ENCODE measurements at regions of chr5 and their contacts with region 1.

Region 1: DNA sequence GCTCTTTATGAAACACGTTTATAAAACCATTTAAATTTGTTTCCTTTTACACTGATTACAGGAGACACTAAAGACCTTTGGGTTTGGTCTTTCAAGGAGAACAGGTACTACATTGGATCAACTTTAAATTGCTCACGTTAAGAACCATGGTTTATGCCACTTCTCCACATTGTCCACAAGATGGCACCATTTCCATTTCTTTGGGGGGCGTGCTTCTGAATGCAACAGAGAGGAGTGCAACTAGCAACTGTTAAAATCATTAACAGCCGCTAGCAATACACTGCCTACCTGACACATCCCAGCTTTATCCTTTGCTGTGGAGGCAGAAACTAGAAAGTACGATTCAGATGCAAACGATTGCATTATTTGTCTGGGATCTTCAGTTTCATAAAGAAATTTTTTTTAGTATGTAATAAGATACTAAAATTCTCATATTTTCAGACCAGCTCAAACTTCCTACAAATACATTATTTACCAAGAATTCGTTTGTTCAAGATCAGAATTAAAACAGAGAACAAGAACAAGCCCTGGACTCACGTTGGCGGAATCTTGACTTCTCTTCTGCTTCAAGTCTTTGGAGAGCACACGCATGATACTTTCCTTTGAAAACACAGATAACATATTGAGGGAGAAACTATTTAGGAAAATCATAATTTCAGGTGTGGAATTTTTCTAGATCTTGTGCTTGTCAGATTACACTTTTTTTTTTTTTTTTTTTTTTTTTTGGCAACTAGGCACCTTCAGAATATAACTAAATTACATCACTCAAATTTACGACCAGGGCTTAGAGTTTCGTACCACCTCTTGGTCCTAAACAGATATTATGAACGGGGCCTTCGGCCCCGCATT is 702 bp downstream of the CDC20B start:
- DNase-seq: no peak
- H3K4me3 ChIP-seq: peak overlapping the region; percentile 29 to 58 (median 42); a peak in 7 of 8 replicates
- H3K27ac ChIP-seq: no peak overlapping the region
- H3K4me1 ChIP-seq: peaks cover 0 to 8% (median 5%) of the 10 kb centered on the region in 4 experiments; a peak in 4 of 7 replicates
- H3K27me3 ChIP-seq: peaks cover 24 to 48% (median 38%) of the 10 kb centered on the region in 4 experiments
- CTCF ChIP-seq: peak in 2 of 3 experiments; percentile 79; a peak in 3 of 4 replicates
- EP300 ChIP-seq: no peak
- POLR2A ChIP-seq: no peak
- RAD21 ChIP-seq: peak; percentile 95

Region 2: DNA sequence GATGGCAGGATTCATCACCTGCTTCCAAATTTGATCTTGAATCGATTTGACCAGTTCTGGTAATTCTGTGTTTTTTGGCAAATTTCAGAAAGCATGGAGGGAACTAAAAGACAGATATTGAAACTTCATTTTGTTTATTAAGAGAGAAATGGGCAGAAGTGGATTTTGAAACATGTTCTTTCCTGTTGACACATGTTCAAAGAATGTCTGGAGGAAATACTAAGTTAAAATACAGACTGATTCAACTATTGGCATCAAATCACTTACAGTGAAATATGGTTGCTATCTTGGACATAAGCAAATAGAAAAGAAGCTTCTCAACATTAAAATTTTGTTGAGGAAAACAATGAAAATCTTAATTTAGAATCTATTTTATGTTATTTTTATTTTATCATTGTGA is 167.5 kb before region 1 on chr5:
- CTCF ChIA-PET with region 1: no interaction called
- POLR2A ChIA-PET with region 1: no interaction called
- DNase-seq: no peak
- H3K4me3 ChIP-seq: no peak overlapping the region
- H3K27ac ChIP-seq: no peak overlapping the region
- H3K4me1 ChIP-seq: no peaks in the 10 kb centered on the region
- H3K27me3 ChIP-seq: no peaks in the 10 kb centered on the region
- CTCF ChIP-seq: no peak
- EP300 ChIP-seq: no peak
- POLR2A ChIP-seq: no peak
- RAD21 ChIP-seq: no peak

Region 3: GRCh38 chr5:55151923-55152842 is 20.1 kb before region 1 on chr5:
- CTCF ChIA-PET with region 1: no interaction called
- POLR2A ChIA-PET with region 1: no interaction called
- DNase-seq: no peak
- H3K4me3 ChIP-seq: no peak overlapping the region
- H3K27ac ChIP-seq: no peak overlapping the region
- H3K4me1 ChIP-seq: no peaks in the 10 kb centered on the region
- H3K27me3 ChIP-seq: no peaks in the 10 kb centered on the region
- CTCF ChIP-seq: no peak
- EP300 ChIP-seq: no peak
- POLR2A ChIP-seq: no peak
- RAD21 ChIP-seq: no peak

Region 4: GRCh38 chr5:55187370-55187769 is 15.1 kb after region 1 on chr5:
- CTCF ChIA-PET with region 1: interaction called, 11 read pairs
- POLR2A ChIA-PET with region 1: interaction called, 4 read pairs
- DNase-seq: no peak
- H3K4me3 ChIP-seq: no peak overlapping the region
- H3K27ac ChIP-seq: no peak overlapping the region
- H3K4me1 ChIP-seq: no peaks in the 10 kb centered on the region
- H3K27me3 ChIP-seq: peaks cover 0 to 6% (median 3%) of the 10 kb centered on the region in 4 experiments; a peak in 3 of 7 replicates
- CTCF ChIP-seq: peak in 1 of 3 experiments; percentile 46; a peak in 2 of 4 replicates
- EP300 ChIP-seq: no peak
- POLR2A ChIP-seq: no peak
- RAD21 ChIP-seq: peak; percentile 44 to 48

Region 5: DNA sequence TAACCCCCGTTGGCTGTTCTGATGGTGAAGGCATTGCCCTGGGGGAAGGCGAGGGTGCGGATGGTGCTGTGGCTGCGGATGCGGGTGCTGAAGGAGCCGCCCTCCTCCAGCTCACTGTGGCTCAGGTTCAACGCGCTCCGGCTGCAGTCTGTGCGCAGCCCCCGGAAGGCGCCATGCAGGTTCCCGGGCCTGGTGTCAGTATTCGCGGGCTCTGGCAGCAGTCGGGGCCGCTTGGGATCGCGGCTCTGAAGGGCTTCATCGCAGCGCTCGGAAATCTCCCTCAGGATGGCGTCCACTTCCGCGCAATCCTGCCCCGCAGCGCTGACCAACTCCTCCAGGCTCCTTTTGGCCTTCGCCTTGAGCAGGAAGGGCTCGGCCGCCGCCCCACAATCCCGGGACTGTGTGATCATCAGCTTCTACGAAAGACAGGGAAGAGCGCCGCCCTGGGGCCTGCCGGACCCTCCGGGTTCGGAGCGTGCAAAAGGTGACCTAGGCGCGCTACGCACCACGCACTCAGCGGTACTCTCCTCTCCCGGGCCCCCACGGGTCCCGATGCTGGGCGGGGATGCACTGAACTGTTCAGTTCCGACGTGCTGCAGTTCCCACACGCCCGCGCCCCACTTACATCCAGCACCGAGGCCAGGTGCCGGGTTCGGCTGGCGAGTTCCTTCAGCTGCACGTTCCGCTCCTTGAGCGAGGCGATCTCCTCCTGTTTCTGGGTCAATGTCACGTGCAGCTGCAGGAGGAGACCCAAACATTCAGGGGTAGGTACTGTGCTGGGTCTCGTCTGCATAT is 48.3 kb after region 1 on chr5:
- CTCF ChIA-PET with region 1: interaction called, 143 read pairs
- POLR2A ChIA-PET with region 1: interaction called, 8 read pairs
- DNase-seq: peak in 1 of 2 experiments; percentile 81
- H3K4me3 ChIP-seq: peak overlapping the region; percentile 35 to 68 (median 60)
- H3K27ac ChIP-seq: no peak overlapping the region
- H3K4me1 ChIP-seq: peaks cover 0 to 15% (median 5%) of the 10 kb centered on the region in 4 experiments; a peak in 6 of 7 replicates
- H3K27me3 ChIP-seq: peaks cover 46 to 62% (median 59%) of the 10 kb centered on the region in 4 experiments
- CTCF ChIP-seq: peak; percentile 34 to 55 (median 45)
- EP300 ChIP-seq: no peak
- POLR2A ChIP-seq: no peak
- RAD21 ChIP-seq: peak; percentile 27 to 53; a peak in 3 of 4 replicates

Region 6: GRCh38 chr5:55232985-55233928 is 61.0 kb after region 1 on chr5 and contains the start of gene CCNO:
- CTCF ChIA-PET with region 1: interaction called, 143 read pairs
- POLR2A ChIA-PET with region 1: interaction called, 8 read pairs
- DNase-seq: peak; percentile 65 to 87
- H3K4me3 ChIP-seq: peak within 1 kb of the TSS; percentile 45 to 70 (median 60)
- H3K27ac ChIP-seq: no peak within 1 kb of the TSS
- H3K4me1 ChIP-seq: peaks cover 0 to 25% (median 13%) of the 10 kb centered on the region in 4 experiments; a peak in 6 of 7 replicates
- H3K27me3 ChIP-seq: peaks cover 56 to 85% (median 79%) of the 10 kb centered on the region in 4 experiments
- CTCF ChIP-seq: no peak
- EP300 ChIP-seq: no peak
- POLR2A ChIP-seq: no peak
- RAD21 ChIP-seq: no peak
- total RNA-seq, gene CCNO: 0.27 and 0.41 TPM in 2 replicates